ENCODE measurements at regions of chrX and their contacts with region 1.

Region 1: GRCh38 chrX:65502618-65503017 is 32.0 kb downstream of the LAS1L start:
- DNase-seq: no peak
- ATAC-seq: no peak
- H3K4me3 Mint-ChIP-seq: no peak overlapping the region
- H3K27ac Mint-ChIP-seq: no peak overlapping the region
- H3K4me1 Mint-ChIP-seq: no peaks in the 10 kb centered on the region
- H3K27me3 Mint-ChIP-seq: no peaks in the 10 kb centered on the region
- CTCF ChIP-seq: no peak

Region 2: GRCh38 chrX:65528705-65529340 is 26.2 kb after region 1 on chrX:
- CTCF ChIA-PET with region 1: interaction called, 12 read pairs
- POLR2A ChIA-PET with region 1: no interaction called
- intact Hi-C with region 1: no loop called
- DNase-seq: peak; percentile 52
- ATAC-seq: peak; percentile 77
- H3K4me3 Mint-ChIP-seq: no peak overlapping the region
- H3K27ac Mint-ChIP-seq: no peak overlapping the region
- H3K4me1 Mint-ChIP-seq: peaks cover 12% of the 10 kb centered on the region
- H3K27me3 Mint-ChIP-seq: no peaks in the 10 kb centered on the region
- CTCF ChIP-seq: peak; percentile 82

Region 3: GRCh38 chrX:65644621-65645270 is 142.1 kb after region 1 on chrX:
- CTCF ChIA-PET with region 1: no interaction called
- POLR2A ChIA-PET with region 1: no interaction called
- intact Hi-C with region 1: no loop called
- DNase-seq: peak; percentile 34
- ATAC-seq: peak; percentile 89
- H3K4me3 Mint-ChIP-seq: no peak overlapping the region
- H3K27ac Mint-ChIP-seq: no peak overlapping the region
- H3K4me1 Mint-ChIP-seq: peaks cover 25% of the 10 kb centered on the region
- H3K27me3 Mint-ChIP-seq: no peaks in the 10 kb centered on the region
- CTCF ChIP-seq: no peak

Region 4: GRCh38 chrX:65841263-65841662 is 338.6 kb after region 1 on chrX:
- CTCF ChIA-PET with region 1: no interaction called
- POLR2A ChIA-PET with region 1: no interaction called
- intact Hi-C with region 1: no loop called
- DNase-seq: no peak
- ATAC-seq: no peak
- H3K4me3 Mint-ChIP-seq: no peak overlapping the region
- H3K27ac Mint-ChIP-seq: no peak overlapping the region
- H3K4me1 Mint-ChIP-seq: peaks cover 6% of the 10 kb centered on the region
- H3K27me3 Mint-ChIP-seq: no peaks in the 10 kb centered on the region
- CTCF ChIP-seq: no peak